ENCODE measurements at regions of chr12 and their contacts with region 1.

Region 1: GRCh38 chr12:132600048-132601032 is 10.0 kb downstream of the LRCOL1 start:
- DNase-seq: peak; percentile 67
- H3K4me3 ChIP-seq: peak overlapping the region in 2 of 3 experiments; percentile 26 to 51
- H3K27ac ChIP-seq: no peak overlapping the region
- H3K4me1 ChIP-seq: peaks cover 24% of the 10 kb centered on the region
- H3K27me3 ChIP-seq: peaks cover 3 to 30% of the 10 kb centered on the region in 2 experiments
- CTCF ChIP-seq: peak; percentile 71 to 87
- POLR2A ChIP-seq: no peak

Region 2: DNA sequence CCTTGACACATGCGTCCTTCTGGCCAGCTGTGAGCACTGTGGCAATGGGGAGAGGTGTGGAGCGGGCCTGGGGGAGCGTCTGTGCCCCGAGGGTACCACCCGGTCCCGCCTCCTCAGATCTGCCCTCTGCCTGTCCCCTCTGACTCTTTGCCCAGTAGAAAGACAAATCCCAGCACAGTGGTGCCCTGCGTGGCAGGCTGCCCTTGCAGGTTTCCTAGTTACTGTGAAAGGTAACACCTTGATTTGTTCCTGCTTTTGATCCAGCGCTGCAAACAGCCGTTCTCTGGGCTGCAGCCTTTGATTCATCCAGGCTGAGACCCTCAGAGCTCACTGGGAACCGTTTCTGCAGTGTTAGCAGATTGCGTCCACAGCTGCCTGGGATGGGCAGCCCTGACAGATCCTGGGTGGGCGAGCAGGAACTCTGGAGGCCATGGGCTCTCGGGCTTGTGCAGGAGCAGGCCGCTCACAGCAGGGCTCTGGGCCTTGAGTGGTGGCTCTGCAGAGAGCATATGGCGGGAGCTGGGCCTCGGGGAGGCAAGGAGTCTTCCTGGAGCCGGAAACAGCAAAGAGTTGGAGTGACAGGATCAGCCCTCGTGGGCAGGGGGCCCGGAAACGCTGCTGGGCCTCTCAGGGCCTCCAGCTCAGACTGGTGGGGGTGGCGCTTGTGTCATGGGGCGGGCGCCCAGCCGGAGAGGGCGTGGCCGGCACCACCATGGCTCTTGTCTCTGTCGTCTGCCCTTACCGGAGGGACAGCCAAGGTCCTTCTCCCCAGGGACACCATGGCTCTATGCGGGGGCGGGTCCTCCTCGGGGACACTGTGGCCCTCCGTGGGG is 93.8 kb before region 1 on chr12:
- CTCF ChIA-PET with region 1: no interaction called
- POLR2A ChIA-PET with region 1: no interaction called
- dilution Hi-C with region 1: no loop called
- intact Hi-C with region 1: loop called (anchors 5 kb)
- DNase-seq: peak; percentile 85
- H3K4me3 ChIP-seq: no peak overlapping the region
- H3K27ac ChIP-seq: peak overlapping the region; percentile 48
- H3K4me1 ChIP-seq: peaks cover 16% of the 10 kb centered on the region
- H3K27me3 ChIP-seq: peaks cover 0 to 10% of the 10 kb centered on the region in 2 experiments
- CTCF ChIP-seq: no peak
- POLR2A ChIP-seq: no peak

Region 3: DNA sequence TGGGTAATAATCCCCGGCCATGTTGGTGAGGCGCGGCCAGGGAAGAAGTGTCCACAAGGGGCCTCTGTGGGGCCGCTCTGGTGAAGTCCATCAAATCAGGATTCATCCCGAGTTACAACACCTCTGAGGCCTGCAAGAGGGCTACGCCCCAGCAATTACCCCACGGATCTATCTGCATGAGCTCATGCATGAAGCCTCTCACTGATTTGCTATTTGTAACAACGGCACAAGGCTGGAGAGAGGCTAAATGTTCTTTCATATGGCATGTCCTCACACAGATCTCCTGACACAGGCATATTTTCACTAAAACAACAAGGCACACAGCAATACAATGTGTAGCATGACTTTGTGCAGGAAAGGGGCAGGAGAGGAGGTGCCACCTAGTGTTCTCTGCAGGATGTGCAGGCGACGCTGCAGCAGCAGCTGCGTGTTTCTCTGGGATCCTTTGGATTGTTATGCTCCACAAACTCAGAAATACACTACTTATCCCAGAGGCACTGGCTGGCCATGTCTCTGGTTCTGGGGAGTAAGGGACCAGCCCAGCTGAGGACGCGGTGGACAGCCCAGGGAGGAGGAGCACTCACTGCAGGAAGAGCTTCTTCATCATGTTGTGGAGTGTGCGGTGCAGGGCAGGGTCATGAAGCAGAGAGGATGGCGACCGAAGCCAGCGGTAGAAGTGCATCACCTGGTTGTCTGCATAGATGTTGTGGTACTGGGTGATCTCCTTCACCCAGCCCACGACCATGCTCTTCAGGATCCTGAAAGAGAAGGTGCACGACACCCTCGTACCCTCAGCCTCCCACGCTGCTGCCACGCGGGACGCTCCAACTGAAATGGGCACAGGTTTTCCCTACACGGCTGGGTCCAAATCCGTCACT is 38.4 kb after region 1 on chr12:
- CTCF ChIA-PET with region 1: interaction called, 12 read pairs
- POLR2A ChIA-PET with region 1: no interaction called
- dilution Hi-C with region 1: no loop called
- intact Hi-C with region 1: loop called (anchors 1 kb)
- DNase-seq: peak; percentile 59
- H3K4me3 ChIP-seq: no peak overlapping the region
- H3K27ac ChIP-seq: no peak overlapping the region
- H3K4me1 ChIP-seq: no peaks in the 10 kb centered on the region
- H3K27me3 ChIP-seq: no peaks in the 10 kb centered on the region
- CTCF ChIP-seq: peak; percentile 78 to 83
- POLR2A ChIP-seq: no peak

Region 4: GRCh38 chr12:132687208-132688164 is 87.1 kb after region 1 on chr12 and contains the starts of genes POLE and PXMP2:
- CTCF ChIA-PET with region 1: no interaction called
- POLR2A ChIA-PET with region 1: no interaction called
- dilution Hi-C with region 1: no loop called
- intact Hi-C with region 1: loop called (anchors 2 kb)
- DNase-seq: peak; percentile 92
- H3K4me3 ChIP-seq: peak within 1 kb of the TSS; percentile 37 to 77 (median 62)
- H3K27ac ChIP-seq: peak within 1 kb of the TSS; percentile 62
- H3K4me1 ChIP-seq: no peaks in the 10 kb centered on the region
- H3K27me3 ChIP-seq: no peaks in the 10 kb centered on the region
- CTCF ChIP-seq: no peak
- POLR2A ChIP-seq: peak; percentile 70
- total RNA-seq, gene POLE: 73.7 and 82.7 TPM in 2 replicates
- total RNA-seq, gene PXMP2: 21.1 and 24.0 TPM in 2 replicates

Measured in endothelial cell of umbilical vein (primary cell).